CD8-positive, alpha-beta T cell (primary cell): ENCODE measurements at regions of chr10 and their contacts with region 1.

Region 1: GRCh38 chr10:17029581-17030271 is 99.9 kb downstream of the CUBN start:
- DNase-seq: peak; percentile 45 to 91 (median 74)
- ATAC-seq: peak; percentile 48
- H3K4me3 ChIP-seq: peak overlapping the region; percentile 47 to 58
- H3K4me3 Mint-ChIP-seq: peak overlapping the region; percentile 79
- H3K27ac ChIP-seq: peak overlapping the region; percentile 63 to 88
- H3K27ac Mint-ChIP-seq: peak overlapping the region; percentile 96
- H3K4me1 ChIP-seq: peaks cover 76% of the 10 kb centered on the region
- H3K4me1 Mint-ChIP-seq: peaks cover 89% of the 10 kb centered on the region
- H3K27me3 ChIP-seq: no peaks in the 10 kb centered on the region
- H3K27me3 Mint-ChIP-seq: no peaks in the 10 kb centered on the region
- CTCF ChIP-seq: no peak

Region 2: DNA sequence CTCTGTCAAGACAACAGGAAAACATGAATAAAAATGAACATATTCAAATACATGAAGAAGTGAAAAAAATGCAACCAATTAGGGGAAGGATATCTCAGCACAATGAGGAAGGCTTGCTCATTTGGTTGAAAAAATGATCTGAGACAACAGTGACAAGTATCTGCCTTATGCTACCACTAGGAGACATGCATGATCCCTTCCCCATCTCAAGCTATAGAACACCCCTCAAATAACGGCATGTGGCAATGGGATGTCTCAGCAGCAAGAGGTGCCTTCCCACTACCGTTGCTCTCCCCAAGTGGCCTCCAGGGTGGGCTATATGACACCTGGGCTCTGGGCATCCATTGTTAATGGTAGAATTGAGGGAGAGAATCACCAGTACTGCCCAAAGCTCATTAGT is 114.4 kb before region 1 on chr10:
- CTCF ChIA-PET with region 1: no interaction called
- POLR2A ChIA-PET with region 1: no interaction called
- intact Hi-C with region 1: loop called in 1 of 2 experiments (anchors 10 kb)
- DNase-seq: peak in 2 of 9 experiments; percentile 31 to 48
- ATAC-seq: no peak
- H3K4me3 ChIP-seq: no peak overlapping the region
- H3K4me3 Mint-ChIP-seq: no peak overlapping the region
- H3K27ac ChIP-seq: no peak overlapping the region
- H3K27ac Mint-ChIP-seq: no peak overlapping the region
- H3K4me1 ChIP-seq: no peaks in the 10 kb centered on the region
- H3K4me1 Mint-ChIP-seq: peaks cover 2% of the 10 kb centered on the region
- H3K27me3 ChIP-seq: no peaks in the 10 kb centered on the region
- H3K27me3 Mint-ChIP-seq: no peaks in the 10 kb centered on the region
- CTCF ChIP-seq: no peak

Region 3: DNA sequence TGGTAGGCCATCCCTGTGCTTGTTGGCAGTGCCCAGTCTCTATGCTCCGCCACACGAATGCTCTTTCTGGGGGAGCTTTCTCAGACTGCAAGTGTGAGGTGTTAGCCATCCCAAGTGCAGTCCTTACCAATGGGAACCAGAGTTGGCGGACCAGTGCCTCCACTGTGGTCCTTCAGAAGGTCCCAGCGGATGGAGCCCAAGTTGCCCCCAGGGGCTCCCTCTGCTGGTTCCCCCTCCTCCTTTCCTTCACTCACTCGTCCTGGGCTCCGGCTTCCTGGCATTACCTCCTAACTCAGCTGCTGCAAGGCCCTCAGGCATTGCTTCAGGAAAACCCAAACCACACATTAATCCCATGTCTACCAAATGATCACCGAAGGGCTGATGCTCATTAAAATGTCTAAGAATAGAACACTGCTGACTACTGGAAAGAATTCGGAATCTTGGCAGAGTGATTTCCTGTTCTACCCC is 39.9 kb before region 1 on chr10:
- CTCF ChIA-PET with region 1: no interaction called
- POLR2A ChIA-PET with region 1: no interaction called
- intact Hi-C with region 1: loop called in 1 of 2 experiments (anchors 5 kb)
- DNase-seq: no peak
- ATAC-seq: no peak
- H3K4me3 ChIP-seq: no peak overlapping the region
- H3K4me3 Mint-ChIP-seq: no peak overlapping the region
- H3K27ac ChIP-seq: no peak overlapping the region
- H3K27ac Mint-ChIP-seq: no peak overlapping the region
- H3K4me1 ChIP-seq: no peaks in the 10 kb centered on the region
- H3K4me1 Mint-ChIP-seq: no peaks in the 10 kb centered on the region
- H3K27me3 ChIP-seq: no peaks in the 10 kb centered on the region
- H3K27me3 Mint-ChIP-seq: no peaks in the 10 kb centered on the region
- CTCF ChIP-seq: no peak

Region 4: GRCh38 chr10:17001961-17002749 is 27.6 kb before region 1 on chr10:
- CTCF ChIA-PET with region 1: no interaction called
- POLR2A ChIA-PET with region 1: no interaction called
- intact Hi-C with region 1: loop called in 1 of 2 experiments (anchors 1 kb)
- DNase-seq: peak in 5 of 9 experiments; percentile 21 to 92 (median 43)
- ATAC-seq: peak; percentile 22
- H3K4me3 ChIP-seq: no peak overlapping the region
- H3K4me3 Mint-ChIP-seq: no peak overlapping the region
- H3K27ac ChIP-seq: peak overlapping the region; percentile 33 to 40
- H3K27ac Mint-ChIP-seq: peak overlapping the region; percentile 87
- H3K4me1 ChIP-seq: peaks cover 41% of the 10 kb centered on the region
- H3K4me1 Mint-ChIP-seq: peaks cover 47% of the 10 kb centered on the region
- H3K27me3 ChIP-seq: no peaks in the 10 kb centered on the region
- H3K27me3 Mint-ChIP-seq: no peaks in the 10 kb centered on the region
- CTCF ChIP-seq: no peak

Region 5: DNA sequence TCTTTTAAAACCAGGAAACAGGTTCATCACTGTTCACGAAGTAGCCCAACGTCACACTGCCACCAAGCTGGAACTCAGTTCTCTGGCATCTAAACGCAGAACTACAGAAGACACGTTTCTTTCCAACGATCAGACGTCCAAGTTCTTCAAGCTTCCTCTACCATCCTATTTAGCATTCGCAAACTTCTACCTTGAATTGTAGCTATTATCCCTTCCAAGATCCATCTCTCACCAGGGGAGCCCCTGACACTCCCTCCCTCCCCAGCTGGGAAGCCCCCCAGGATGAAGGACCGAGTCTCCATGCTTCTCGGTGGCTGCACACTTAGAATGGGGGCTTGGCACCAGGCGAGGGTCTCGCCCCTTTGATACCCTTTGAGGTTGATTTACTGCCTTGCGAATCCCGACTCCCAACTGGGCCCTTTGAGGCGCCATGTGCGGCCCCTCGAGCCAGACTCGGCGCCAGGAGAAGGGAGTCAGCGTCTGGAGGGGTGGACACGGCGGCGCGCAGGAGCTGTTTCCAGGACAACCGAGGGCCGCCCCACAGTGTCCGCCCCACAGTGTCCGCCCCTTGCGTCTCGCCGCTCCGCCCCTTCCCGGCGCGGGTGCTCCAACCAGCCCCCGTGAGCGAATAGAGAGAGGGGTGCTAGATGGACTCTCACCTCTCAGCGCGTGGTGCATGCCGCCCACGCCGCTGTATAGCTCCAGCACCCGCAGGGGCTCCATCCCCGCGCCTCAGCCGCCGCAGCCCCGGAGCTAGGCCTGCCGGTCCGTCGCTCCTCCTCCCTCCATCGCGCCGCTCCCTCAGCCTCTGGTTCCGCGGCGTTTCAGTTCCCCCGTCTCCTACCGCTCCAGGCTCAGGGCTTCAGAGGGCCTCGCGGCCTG is 171.4 kb after region 1 on chr10 and contains the start of gene TRDMT1:
- CTCF ChIA-PET with region 1: no interaction called
- POLR2A ChIA-PET with region 1: no interaction called
- intact Hi-C with region 1: loop called in 1 of 2 experiments (anchors 1 kb)
- DNase-seq: peak; percentile 66 to 87 (median 76)
- ATAC-seq: peak; percentile 77
- H3K4me3 ChIP-seq: peak within 1 kb of the TSS; percentile 69 to 83
- H3K4me3 Mint-ChIP-seq: peak within 1 kb of the TSS; percentile 98
- H3K27ac ChIP-seq: peak within 1 kb of the TSS; percentile 80 to 92
- H3K27ac Mint-ChIP-seq: peak within 1 kb of the TSS; percentile 97
- H3K4me1 ChIP-seq: peaks cover 21% of the 10 kb centered on the region
- H3K4me1 Mint-ChIP-seq: peaks cover 35% of the 10 kb centered on the region
- H3K27me3 ChIP-seq: no peaks in the 10 kb centered on the region
- H3K27me3 Mint-ChIP-seq: no peaks in the 10 kb centered on the region
- CTCF ChIP-seq: no peak
- total RNA-seq, gene TRDMT1: 10.4 to 11.7 TPM